ENCODE measurements at regions of chr11 and their contacts with region 1.

Region 1: DNA sequence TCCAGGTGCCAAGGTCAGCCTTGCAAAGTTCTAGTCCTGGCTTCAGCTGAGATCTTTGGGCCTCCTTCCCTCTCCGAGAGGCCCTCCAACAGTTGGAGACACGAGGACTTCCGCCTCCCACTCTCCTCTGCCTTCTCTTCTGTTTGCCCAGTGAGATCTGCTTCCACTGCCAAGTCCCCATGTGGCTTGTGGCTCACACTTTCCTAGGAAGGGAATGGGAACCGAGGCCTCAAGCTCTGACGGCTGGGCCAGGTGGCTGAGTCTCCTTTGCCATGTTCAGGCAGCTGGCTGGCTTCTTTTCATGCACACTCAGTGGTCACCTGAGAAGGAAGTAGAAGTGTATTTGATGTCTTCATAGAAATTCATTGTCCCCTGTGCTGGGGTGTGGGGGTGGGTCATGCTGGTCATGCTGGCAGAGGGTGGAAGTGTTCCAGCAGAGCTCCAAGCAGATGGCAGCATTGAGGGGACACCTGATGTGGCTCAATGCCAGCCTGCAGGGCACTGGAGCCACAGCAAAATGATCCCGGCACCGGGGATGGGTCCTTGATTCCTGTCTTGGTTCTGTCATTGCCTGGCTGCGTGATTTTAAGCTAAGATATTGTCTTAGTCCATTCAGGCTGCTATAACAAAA is 130.4 kb downstream of the ADAMTS15 start:
- DNase-seq: no peak
- H3K4me3 ChIP-seq: no peak overlapping the region
- H3K4me3 Mint-ChIP-seq: no peak overlapping the region
- H3K27ac Mint-ChIP-seq: no peak overlapping the region
- H3K4me1 ChIP-seq: no peaks in the 10 kb centered on the region
- H3K4me1 Mint-ChIP-seq: no peaks in the 10 kb centered on the region
- H3K27me3 ChIP-seq: peaks cover 1% of the 10 kb centered on the region; the same call in 1 of the 2 replicates
- H3K27me3 Mint-ChIP-seq: peaks cover 14% of the 10 kb centered on the region
- CTCF ChIP-seq: no peak

Region 2: DNA sequence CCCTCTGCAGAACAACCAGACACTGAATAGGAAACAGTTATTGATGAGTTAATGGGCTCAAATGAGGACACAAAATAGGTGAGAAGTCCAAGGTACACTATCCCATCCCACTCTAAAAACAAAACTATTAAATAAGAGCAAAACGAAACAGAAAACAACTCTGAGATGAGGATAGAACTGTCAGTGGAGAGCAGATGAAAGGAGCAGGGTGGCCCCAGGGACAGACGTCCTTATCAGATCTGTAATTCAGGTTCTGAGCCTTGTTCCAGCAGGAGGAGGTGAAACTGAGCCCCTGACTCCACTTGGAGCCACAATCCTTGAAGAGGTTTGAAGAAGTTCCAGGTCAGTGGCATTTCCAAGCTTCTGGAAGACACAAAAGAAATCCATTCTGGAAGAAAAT is 345.9 kb after region 1 on chr11:
- CTCF ChIA-PET with region 1: no interaction called
- POLR2A ChIA-PET with region 1: no interaction called
- intact Hi-C with region 1: no loop called
- DNase-seq: no peak
- H3K4me3 ChIP-seq: no peak overlapping the region
- H3K4me3 Mint-ChIP-seq: no peak overlapping the region
- H3K27ac Mint-ChIP-seq: no peak overlapping the region
- H3K4me1 ChIP-seq: no peaks in the 10 kb centered on the region
- H3K4me1 Mint-ChIP-seq: no peaks in the 10 kb centered on the region
- H3K27me3 ChIP-seq: peaks cover 1% of the 10 kb centered on the region; the same call in 1 of the 2 replicates
- H3K27me3 Mint-ChIP-seq: peaks cover 18% of the 10 kb centered on the region
- CTCF ChIP-seq: no peak

Region 3: DNA sequence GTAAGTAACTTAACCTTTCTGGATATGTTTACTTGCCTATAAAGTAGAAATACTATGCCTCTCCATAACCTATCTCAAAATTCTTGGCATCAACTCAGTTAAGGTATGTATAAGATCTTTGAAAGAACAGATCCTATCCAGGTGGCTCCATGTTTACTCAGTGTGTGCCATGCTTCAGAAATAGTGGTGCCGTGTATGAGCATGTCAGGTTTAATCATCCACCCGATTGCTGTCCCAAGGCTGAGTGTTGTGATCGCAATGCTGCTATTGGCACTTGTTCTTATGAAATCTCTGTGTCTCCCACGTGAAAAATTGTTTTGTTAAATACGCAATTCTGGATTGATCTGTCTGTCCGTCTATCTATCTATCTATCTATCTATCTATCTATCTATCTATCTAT is 423.3 kb after region 1 on chr11:
- CTCF ChIA-PET with region 1: no interaction called
- POLR2A ChIA-PET with region 1: no interaction called
- intact Hi-C with region 1: no loop called
- DNase-seq: no peak
- H3K4me3 ChIP-seq: no peak overlapping the region
- H3K4me3 Mint-ChIP-seq: no peak overlapping the region
- H3K27ac Mint-ChIP-seq: no peak overlapping the region
- H3K4me1 ChIP-seq: peaks cover 7% of the 10 kb centered on the region; the same call in 1 of the 2 replicates
- H3K4me1 Mint-ChIP-seq: peaks cover 21% of the 10 kb centered on the region
- H3K27me3 ChIP-seq: no peaks in the 10 kb centered on the region
- H3K27me3 Mint-ChIP-seq: peaks cover 8% of the 10 kb centered on the region
- CTCF ChIP-seq: no peak

Region 4: DNA sequence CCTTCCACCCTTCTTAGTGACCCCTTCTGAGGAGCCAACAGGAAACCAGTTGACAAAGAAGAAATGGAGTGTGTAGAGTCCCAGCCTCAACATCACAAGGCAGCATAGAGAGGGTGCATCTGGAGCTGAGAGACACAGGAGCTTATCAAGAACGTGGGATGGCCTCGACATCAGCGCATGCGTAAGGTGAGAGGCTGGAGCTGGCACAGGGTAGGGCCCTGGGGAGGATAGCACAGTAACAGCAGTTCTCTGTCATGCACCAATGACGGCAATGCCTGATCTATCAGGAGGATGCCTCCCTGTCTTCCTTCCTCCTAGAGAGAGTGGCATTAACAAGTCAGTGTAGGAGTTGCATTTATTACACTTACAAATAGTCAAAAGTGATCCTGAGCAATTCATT is 1217.7 kb after region 1 on chr11:
- CTCF ChIA-PET with region 1: interaction called, 11 read pairs
- POLR2A ChIA-PET with region 1: no interaction called
- intact Hi-C with region 1: no loop called
- DNase-seq: no peak
- H3K4me3 ChIP-seq: no peak overlapping the region
- H3K4me3 Mint-ChIP-seq: no peak overlapping the region
- H3K27ac Mint-ChIP-seq: no peak overlapping the region
- H3K4me1 ChIP-seq: no peaks in the 10 kb centered on the region
- H3K4me1 Mint-ChIP-seq: no peaks in the 10 kb centered on the region
- H3K27me3 ChIP-seq: no peaks in the 10 kb centered on the region
- H3K27me3 Mint-ChIP-seq: peaks cover 17% of the 10 kb centered on the region
- CTCF ChIP-seq: no peak

Measured in Caco-2 (cell line).